ENCODE measurements at regions of chr5 and their contacts with region 1.

Region 1: DNA sequence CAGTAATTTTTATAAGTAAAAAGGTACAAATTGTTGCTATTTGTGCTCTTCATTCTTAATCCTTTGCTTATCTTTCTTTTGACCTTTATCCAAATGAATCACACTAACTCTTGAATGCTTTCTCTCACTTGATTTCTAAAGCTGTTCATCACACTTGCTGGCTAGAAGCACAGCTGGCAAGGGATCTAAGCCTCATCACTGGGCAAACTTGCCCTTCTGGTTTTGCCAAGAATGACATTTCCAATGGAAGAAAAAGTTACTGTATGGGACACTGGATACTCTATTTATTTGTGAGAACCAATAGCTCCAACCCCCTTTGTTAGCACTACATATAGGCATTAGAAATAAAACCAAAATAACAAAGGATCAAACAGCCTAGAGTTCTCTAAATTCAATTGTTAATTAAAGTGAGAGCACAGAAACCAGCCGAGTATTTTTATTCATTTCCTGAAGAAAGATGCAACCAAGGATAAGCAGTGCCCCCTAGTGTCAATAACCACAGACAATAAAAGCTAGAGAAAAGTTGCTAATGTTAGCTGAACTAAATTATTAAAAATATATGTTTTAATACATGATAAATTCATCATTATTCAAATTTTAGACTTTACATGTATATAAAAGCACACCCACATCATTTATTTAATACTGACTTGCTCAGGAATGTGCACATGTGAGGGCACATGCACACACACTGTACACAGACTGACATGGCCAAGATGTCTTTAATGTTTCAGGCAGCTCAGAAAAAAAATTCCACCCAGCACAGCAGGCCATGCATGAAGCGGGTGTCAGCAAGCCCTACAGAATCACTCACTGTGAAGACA is 59.8 kb upstream of the POU5F2 start:
- DNase-seq: no peak
- ATAC-seq: no peak

Region 2: GRCh38 chr5:93607367-93608258 is 193.6 kb before region 1 on chr5:
- intact Hi-C with region 1: loop called (anchors 10 kb)
- DNase-seq: no peak
- ATAC-seq: peak; percentile 79